ENCODE measurements at regions of chr11 and their contacts with region 1.

Region 1: DNA sequence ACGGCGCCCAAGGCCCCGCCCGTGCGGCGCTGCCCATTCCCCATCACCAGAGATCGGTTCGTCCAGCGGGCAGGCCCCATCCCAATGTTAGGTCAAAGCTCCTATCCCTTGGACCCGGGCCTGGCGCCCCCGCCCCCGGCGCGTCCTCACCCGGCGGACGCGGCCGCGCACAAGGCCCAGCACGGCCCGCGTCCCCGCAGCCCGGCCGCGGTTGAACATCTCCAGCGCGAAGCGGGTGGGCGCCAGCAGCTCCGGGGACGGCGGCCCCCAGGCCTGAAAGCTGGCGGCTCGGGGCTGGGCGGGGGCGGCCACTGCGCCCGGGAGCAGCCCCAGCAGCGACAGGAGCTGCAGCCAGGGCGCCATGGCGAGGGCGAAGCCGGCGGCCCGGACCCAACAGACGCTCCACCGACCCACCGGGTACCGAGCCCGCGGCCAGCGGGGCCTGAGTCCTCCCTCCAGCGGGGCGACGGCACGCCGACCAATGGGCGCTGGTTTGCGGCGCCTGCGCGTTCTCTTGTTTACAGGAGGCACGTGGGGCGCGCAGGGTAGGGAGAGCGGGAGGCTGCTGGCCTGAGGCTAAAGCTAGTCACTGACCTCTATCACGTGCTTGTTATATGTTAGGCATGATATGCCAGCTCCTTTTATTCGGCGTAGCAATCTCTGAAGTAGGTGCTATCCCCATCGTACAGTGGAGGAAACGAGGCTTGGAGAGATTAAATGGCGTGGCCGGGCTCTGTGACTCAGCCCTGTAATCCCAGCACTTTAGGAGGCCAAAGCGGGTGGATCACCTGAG is at the start of gene CTSF:
- DNase-seq: peak; percentile 61 to 84
- H3K4me3 ChIP-seq: peak within 1 kb of the TSS; percentile 56; the same call in 1 of the 2 replicates
- H3K27ac ChIP-seq: no peak within 1 kb of the TSS
- H3K4me1 ChIP-seq: peaks cover 5% of the 10 kb centered on the region; the same call in 1 of the 2 replicates
- H3K27me3 ChIP-seq: peaks cover 21% of the 10 kb centered on the region
- CTCF ChIP-seq: no peak
- total RNA-seq, gene CTSF: 34.3 and 59.2 TPM in 2 replicates

Region 2: GRCh38 chr11:66545701-66546367 is 22.5 kb before region 1 on chr11 and contains the start of gene ZDHHC24:
- CTCF ChIA-PET with region 1: no interaction called
- POLR2A ChIA-PET with region 1: interaction called, 4 read pairs
- intact Hi-C with region 1: loop called (anchors 2 kb)
- DNase-seq: peak; percentile 89 to 98
- H3K4me3 ChIP-seq: peak within 1 kb of the TSS; percentile 87
- H3K27ac ChIP-seq: no peak within 1 kb of the TSS
- H3K4me1 ChIP-seq: peaks cover 13% of the 10 kb centered on the region
- H3K27me3 ChIP-seq: peaks cover 33% of the 10 kb centered on the region
- CTCF ChIP-seq: no peak
- total RNA-seq, gene ZDHHC24: 19.4 and 28.7 TPM in 2 replicates

Region 3: DNA sequence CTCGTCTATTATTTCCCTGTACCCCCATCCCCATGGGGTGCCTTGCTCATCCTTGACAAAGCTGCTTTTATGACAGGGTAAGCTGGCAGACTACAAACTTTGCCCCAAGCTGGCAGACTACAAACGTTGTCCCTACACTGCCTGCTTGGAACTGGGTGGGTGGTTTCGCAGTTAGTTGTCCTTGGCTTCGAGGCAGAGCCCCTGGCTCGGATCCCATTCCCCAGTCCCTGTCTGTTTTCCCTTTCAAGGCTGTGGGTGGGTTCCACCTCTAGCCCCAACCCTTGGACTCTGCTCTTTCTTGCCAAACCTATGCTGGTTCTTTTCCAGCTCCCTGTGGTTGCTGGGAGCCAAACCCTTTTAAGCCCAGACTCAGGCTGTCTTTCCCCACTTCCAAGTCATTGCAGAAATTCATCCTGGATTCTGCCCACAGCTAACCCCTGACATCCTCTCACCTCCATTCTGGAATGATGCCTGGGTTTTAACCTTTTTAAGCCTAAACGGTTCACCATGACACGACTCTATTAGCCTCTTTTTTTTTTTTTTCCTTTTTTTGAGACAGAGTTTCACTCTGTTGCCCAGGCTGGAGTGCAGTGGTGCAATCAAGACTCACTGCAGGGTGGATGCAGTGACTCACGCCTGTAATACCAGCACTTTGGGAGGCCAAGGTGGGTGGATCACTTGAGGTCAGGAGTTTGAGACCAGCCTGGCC is 39.0 kb after region 1 on chr11:
- CTCF ChIA-PET with region 1: no interaction called
- POLR2A ChIA-PET with region 1: interaction called, 23 read pairs
- intact Hi-C with region 1: no loop called
- DNase-seq: no peak
- H3K4me3 ChIP-seq: no peak overlapping the region
- H3K27ac ChIP-seq: no peak overlapping the region
- H3K4me1 ChIP-seq: peaks cover 2% of the 10 kb centered on the region
- H3K27me3 ChIP-seq: no peaks in the 10 kb centered on the region
- CTCF ChIP-seq: no peak

Measured in PC-9 (cell line).